AG04450 (cell line): ENCODE measurements at regions of chr1 and their contacts with region 1.

Region 1: DNA sequence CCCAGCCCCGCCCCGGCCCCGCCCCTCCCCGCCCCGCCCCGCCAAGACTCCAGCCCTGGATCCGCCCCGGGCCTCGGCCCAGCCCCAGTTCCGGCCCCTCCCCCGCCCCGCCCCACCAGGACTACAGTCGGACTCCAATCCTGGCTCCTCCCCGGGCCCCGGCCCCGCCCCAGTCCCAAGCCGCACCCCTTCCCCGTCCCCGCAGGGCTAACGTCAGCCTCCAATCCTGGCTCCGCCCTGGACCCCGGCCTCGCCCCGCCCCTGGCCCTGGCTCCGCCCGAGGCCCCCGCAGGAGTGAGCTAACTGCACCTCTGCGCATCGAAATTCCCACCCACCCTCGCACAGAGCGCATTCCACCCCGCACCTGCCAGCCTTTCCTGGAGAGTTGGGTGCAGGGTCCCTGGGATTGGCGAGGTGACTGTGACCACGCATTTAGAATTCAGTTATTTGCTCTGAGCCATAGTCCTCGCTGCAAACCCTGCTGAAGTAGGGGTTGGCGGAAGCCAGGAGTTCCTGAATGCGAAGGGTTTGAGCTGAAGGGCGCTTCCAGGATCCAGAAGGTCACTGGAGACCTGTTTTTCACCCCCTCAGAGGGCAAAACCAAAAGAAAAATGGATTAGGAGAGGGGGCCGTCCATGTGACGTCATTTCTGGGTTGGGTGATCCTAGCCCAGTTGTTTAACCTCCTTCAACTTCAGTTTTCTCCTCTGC is 588 bp upstream of the IGSF8 start:
- DNase-seq: peak; percentile 79
- H3K4me3 ChIP-seq: peak overlapping the region; percentile 78
- H3K27ac ChIP-seq: peak overlapping the region; percentile 47
- H3K27me3 ChIP-seq: no peaks in the 10 kb centered on the region
- CTCF ChIP-seq: no peak

Region 2: GRCh38 chr1:160108888-160109662 is 10.1 kb after region 1 on chr1:
- CTCF ChIA-PET with region 1: interaction called, 20 read pairs
- POLR2A ChIA-PET with region 1: no interaction called
- DNase-seq: no peak
- H3K4me3 ChIP-seq: no peak overlapping the region
- H3K27ac ChIP-seq: no peak overlapping the region
- H3K27me3 ChIP-seq: peaks cover 16% of the 10 kb centered on the region
- CTCF ChIP-seq: peak; percentile 55

Region 3: DNA sequence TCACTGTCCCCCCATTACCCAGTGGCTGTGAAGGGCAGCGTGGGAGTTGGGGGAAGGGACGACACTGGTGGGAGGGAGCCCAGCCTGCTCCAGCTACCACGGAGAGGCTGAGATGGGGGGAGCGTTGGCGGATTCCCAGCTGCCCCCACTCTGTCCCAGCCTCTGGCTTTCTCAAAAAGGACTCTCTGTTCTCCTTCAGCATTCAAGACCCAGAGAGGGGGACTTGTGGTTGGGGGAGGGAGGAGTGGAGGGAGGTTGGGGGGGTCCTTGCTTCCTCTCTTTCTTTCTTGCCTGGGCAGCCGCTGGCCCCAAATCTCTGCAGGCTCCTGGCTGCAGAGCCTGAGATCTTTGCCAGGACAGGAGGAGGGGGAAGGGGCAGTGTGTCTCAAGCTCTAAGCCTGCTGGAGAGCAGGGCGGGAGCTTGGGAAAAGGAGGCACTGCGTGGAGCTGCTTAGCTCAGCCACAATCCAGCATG is 18.7 kb after region 1 on chr1:
- CTCF ChIA-PET with region 1: interaction called, 17 read pairs
- POLR2A ChIA-PET with region 1: no interaction called
- DNase-seq: no peak
- H3K4me3 ChIP-seq: peak overlapping the region; percentile 17; the same call in 1 of the 2 replicates
- H3K27ac ChIP-seq: no peak overlapping the region
- H3K27me3 ChIP-seq: peaks cover 37% of the 10 kb centered on the region
- CTCF ChIP-seq: no peak

Region 4: GRCh38 chr1:160124705-160125478 is 25.9 kb after region 1 on chr1:
- CTCF ChIA-PET with region 1: interaction called, 10 read pairs
- POLR2A ChIA-PET with region 1: no interaction called
- DNase-seq: peak; percentile 76
- H3K4me3 ChIP-seq: no peak overlapping the region
- H3K27ac ChIP-seq: peak overlapping the region; percentile 87
- H3K27me3 ChIP-seq: peaks cover 5% of the 10 kb centered on the region
- CTCF ChIP-seq: peak; percentile 51

Region 5: GRCh38 chr1:160284782-160285344 is 185.9 kb after region 1 on chr1 and contains the start of gene PEX19:
- CTCF ChIA-PET with region 1: interaction called, 84 read pairs
- POLR2A ChIA-PET with region 1: no interaction called
- DNase-seq: peak; percentile 89
- H3K4me3 ChIP-seq: peak within 1 kb of the TSS; percentile 93
- H3K27ac ChIP-seq: peak within 1 kb of the TSS; percentile 85
- H3K27me3 ChIP-seq: no peaks in the 10 kb centered on the region
- CTCF ChIP-seq: no peak
- polyA plus RNA-seq, gene PEX19: 77.2 and 87.5 TPM in 2 replicates

Region 6: DNA sequence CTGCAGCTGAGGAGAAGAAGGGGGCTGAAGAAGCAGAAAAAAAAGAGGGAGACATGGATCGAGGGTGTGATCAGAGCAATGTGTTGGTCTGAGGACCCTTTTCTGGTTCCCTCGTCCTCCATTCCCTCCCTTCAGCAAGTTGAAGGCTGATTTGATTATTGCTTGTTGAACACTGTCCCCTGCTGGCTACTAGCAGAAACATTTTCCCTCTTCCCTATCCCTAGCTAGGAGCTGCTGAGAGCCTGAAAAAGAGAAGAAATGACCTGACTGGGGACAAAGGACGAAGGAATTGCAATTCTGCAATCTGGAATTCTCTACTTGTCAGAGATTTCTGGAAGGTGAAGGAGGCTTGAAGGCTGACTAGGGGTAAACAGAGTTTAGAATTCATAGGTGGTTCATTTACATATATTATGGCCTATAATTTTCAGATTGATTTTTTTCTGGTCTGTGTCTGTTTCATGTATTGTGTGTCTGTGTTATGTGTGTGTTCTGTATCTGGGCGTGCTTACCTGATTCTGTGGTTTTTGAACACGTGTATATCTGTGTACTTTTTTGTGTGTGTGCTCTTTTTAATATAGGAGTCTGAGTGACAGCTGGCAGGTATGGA is 277.6 kb after region 1 on chr1:
- CTCF ChIA-PET with region 1: interaction called, 30 read pairs
- POLR2A ChIA-PET with region 1: no interaction called
- DNase-seq: peak; percentile 37
- H3K4me3 ChIP-seq: no peak overlapping the region
- H3K27ac ChIP-seq: no peak overlapping the region
- H3K27me3 ChIP-seq: peaks cover 2% of the 10 kb centered on the region
- CTCF ChIP-seq: peak; percentile 99

Region 7: GRCh38 chr1:160625725-160626498 is 526.9 kb after region 1 on chr1:
- CTCF ChIA-PET with region 1: no interaction called
- POLR2A ChIA-PET with region 1: no interaction called
- DNase-seq: no peak
- H3K4me3 ChIP-seq: no peak overlapping the region
- H3K27ac ChIP-seq: no peak overlapping the region
- H3K27me3 ChIP-seq: no peaks in the 10 kb centered on the region
- CTCF ChIP-seq: no peak